Activated T-helper 2 cell treated with anti-CD3 and anti-CD28 coated beads, Interferon-gamma antibody, Interleukin-2, Interleukin-4, amounts not matched to agents 10 μg/mL and 5 μg/mL and 100 μg/mL, durations not matched to agents 14 hours and 24 hours and 36 hours (primary cell): ENCODE measurements at regions of chr20 and their contacts with region 1.

Region 1: DNA sequence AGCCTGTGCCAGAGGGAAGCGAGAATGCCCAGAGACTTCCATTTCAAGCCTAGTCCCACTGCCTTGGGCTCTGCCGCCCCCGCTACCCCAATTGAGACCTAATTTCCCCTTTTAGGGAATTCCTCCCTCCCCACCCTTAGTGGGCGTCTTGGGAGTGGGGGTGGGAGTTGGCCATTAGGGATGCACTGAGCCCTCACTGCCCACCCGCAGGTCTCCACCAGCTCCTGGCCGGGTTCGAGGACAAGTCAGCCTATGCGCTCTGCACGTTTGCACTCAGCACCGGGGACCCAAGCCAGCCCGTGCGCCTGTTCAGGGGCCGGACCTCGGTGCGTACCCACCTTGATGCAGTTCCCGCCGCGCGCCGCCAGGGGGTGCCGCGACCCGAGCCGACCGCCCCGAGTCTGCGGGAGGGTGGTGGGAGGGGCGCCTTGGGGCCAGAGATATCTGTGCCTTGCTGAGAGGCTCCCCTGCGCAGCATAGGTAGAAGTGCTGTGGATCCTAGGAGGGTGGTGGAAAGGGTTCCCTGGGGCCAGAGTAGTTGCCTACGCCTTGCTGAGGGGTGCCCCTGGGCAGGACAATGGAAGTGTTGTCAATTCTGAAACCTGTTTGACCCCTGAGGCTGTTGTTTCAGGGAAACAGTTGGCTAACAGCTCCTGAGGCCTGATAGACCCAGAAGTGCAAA is 9.2 kb downstream of the ITPA start:
- DNase-seq: peak; percentile 60
- H3K4me3 Mint-ChIP-seq: no peak overlapping the region
- H3K27ac Mint-ChIP-seq: no peak overlapping the region
- H3K4me1 Mint-ChIP-seq: peaks cover 4% of the 10 kb centered on the region
- H3K27me3 Mint-ChIP-seq: no peaks in the 10 kb centered on the region

Region 2: DNA sequence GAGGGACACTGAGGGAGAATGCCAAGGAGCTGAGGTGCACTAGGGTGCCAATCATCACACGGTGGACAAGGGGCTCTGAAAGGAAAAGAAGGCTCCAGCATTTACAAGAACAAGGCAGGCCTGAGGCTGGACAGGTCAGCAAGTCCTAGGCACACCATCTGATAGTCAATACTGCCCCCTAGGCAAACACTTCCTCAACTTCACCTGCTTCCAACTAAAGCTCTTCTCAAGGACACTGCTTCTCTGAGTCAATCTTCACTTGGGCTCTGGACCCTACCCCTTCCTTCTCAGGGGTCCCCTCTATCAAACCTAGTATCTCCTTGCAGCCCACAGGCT is 58.2 kb after region 1 on chr20:
- intact Hi-C with region 1: loop called (anchors 5 kb)
- DNase-seq: no peak
- H3K4me3 Mint-ChIP-seq: no peak overlapping the region
- H3K27ac Mint-ChIP-seq: no peak overlapping the region
- H3K4me1 Mint-ChIP-seq: no peaks in the 10 kb centered on the region
- H3K27me3 Mint-ChIP-seq: no peaks in the 10 kb centered on the region

Region 3: DNA sequence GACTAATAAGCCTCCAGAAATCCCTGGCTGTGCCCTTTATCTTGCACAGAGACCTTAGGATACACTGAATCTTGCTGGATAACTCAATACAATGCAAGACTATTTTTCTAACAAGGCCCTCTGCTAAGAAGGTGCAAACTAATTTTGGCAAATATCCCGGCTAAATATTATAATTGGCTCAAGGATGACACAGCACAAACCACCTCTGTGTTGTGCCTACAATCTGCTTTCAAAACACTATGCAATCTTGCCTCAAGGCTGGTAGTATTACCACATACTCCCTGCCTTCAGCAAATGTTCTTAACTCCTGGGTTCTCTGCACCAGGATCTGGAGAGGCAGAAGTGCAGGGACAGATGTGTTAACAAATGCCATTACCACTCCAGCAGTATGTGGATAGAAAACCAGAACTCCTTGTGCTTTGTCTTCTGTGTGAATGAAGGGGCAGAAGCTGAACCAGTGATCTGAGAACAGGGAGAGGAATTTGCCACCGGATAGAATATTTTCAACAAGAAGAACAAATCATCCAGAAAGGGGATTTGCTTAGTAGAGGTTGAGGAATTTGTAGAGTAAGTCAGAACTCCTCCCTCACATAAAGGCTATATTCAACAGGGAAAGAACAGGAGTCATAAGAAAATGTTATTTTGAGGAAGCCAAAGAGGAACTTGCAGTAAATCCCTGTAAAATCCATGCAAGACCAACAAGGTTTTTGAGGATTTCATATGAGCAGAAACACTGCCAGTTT is 94.7 kb after region 1 on chr20:
- intact Hi-C with region 1: loop called (anchors 2 kb)
- DNase-seq: no peak
- H3K4me3 Mint-ChIP-seq: no peak overlapping the region
- H3K27ac Mint-ChIP-seq: no peak overlapping the region
- H3K4me1 Mint-ChIP-seq: no peaks in the 10 kb centered on the region
- H3K27me3 Mint-ChIP-seq: no peaks in the 10 kb centered on the region